Sciatic nerve (tissue), 2 donors: ENCODE measurements at regions of chr21 and their contacts with region 1.

Region 1: GRCh38 chr21:42117229-42117966 is 46.3 kb downstream of the UMODL1 start:
- DNase-seq: peak; percentile 90
- ATAC-seq: peak; percentile 88

Region 2: GRCh38 chr21:41601573-41602368 is 515.6 kb before region 1 on chr21:
- intact Hi-C with region 1: loop called (anchors 10 kb)
- DNase-seq: peak; percentile 32
- ATAC-seq: no peak

Region 3: DNA sequence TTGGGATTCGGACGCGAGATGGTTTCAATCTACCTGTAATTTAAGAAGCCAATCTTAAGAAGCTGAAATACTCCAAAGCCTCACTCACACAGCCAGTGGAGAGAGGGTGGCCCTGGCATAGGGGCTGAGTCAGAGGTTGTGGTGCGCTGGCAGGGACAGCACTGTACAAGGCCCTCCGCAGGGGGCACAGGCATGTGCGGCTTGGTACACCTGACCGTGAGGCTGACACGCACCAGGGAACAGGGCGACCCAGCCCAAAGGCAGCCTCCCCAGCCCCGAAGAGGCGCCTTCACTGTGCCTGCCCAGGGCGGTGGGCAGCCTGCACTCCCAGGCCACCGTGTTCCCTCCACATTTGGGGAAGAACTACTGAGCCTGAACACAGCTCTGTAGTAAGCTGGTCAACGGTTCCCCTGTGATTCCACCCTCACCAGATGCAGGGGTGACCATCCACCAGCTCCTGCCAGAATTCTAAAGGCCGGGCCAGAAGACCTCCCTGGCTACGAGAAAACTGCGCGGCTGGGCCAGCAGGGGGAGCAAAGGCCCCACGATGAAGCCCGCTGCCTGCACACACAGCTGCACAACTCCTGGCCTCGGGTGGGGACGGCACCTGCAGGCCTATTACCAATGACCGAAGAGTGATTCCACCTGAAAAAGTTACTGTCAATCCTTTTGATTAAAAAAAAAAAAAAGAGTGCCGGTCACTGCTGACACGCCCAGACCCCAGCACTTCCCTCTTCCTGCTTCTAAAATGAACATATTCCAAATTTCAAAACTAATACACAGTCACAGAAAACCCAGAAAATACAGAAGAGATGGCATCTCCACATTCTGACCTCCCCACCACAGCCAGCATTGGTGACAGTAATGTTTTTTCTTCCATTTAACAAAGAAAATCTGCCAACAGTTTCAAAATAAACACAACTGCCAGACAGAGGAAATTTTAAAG is 300.9 kb before region 1 on chr21:
- intact Hi-C with region 1: loop called (anchors 5 kb)
- DNase-seq: peak; percentile 78
- ATAC-seq: peak; percentile 93

Region 4: DNA sequence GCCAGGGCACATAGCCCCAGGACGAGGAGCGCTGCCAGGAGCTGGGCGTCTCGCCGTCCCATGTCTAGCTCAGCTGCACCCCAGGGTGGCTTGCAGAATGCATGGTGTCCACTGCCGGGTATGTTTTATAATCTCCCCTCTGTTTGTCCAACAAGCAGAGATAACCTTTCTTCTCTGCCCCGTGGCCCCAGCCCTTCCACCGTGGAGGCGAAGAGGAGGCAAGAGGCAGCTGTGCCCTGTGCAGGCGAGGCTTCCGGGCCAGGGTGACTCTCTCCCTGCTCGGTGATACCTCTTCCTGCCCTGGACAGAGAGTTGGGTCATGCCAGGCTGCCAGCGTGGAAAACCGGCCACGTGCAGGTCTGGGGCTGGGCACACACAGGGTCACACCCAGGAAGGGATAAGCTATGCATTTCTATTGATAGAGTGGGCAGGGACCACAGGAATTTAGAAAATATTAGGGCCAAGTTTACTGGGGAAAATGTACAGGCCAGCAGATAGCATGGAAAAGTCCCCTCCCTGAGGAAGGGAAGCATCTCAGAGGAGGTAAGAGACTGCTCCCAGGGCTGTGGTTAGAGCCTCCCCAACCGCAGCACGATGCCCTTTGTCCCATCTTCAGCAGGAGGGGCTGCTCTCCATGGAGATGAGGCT is 233.6 kb after region 1 on chr21 and contains the start of gene TFF2:
- intact Hi-C with region 1: no loop called
- DNase-seq: peak; percentile 37
- ATAC-seq: no peak
- total RNA-seq, gene TFF2: not detected